ENCODE measurements at regions of chr7 and their contacts with region 1.

Region 1: DNA sequence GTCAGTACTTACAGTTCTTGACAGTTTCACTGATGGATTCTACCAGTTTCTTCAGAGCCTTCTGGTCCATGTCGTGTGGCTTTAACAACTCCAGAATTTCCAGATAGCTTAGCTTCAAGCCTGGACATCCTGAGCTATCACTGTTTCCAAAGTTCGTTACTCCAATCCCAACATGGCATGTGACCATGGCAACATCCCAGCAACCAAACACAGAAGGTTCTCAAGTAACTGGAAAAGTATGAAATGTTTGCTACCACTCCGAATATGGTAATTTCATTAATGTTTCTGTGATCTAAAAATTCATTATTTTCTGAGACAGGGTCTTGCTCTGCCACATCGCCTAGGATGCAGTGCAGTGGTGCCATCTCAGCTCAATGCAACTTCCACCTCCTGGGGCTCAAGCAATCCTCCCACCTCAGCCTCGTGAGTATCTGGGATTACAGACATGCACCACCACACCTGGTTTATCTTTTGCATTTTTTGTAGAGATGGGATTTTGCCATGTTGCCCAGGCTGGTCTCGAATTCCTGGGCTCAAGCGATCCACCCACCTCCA is 29.3 kb downstream of the RBM48 start:
- DNase-seq: no peak
- H3K4me3 ChIP-seq: no peak overlapping the region
- H3K27ac ChIP-seq: no peak overlapping the region
- H3K4me1 ChIP-seq: no peaks in the 10 kb centered on the region
- CTCF ChIP-seq: no peak

Region 2: GRCh38 chr7:92547579-92547978 is 10.3 kb before region 1 on chr7:
- CTCF ChIA-PET with region 1: no interaction called
- POLR2A ChIA-PET with region 1: interaction called, 13 read pairs
- intact Hi-C with region 1: no loop called
- DNase-seq: no peak
- H3K4me3 ChIP-seq: no peak overlapping the region
- H3K27ac ChIP-seq: no peak overlapping the region
- H3K4me1 ChIP-seq: no peaks in the 10 kb centered on the region
- CTCF ChIP-seq: no peak